Posterior vena cava (tissue), 2 donors: ENCODE measurements at regions of chr20 and their contacts with region 1.

Region 1: GRCh38 chr20:60877071-60877857 is 374.8 kb upstream of the CDH4 start:
- DNase-seq: no peak

Region 2: GRCh38 chr20:60806328-60806727 is 70.9 kb before region 1 on chr20:
- intact Hi-C with region 1: no loop called
- DNase-seq: no peak

Region 3: GRCh38 chr20:60888771-60889170 is 11.5 kb after region 1 on chr20:
- intact Hi-C with region 1: no loop called
- DNase-seq: no peak

Region 4: DNA sequence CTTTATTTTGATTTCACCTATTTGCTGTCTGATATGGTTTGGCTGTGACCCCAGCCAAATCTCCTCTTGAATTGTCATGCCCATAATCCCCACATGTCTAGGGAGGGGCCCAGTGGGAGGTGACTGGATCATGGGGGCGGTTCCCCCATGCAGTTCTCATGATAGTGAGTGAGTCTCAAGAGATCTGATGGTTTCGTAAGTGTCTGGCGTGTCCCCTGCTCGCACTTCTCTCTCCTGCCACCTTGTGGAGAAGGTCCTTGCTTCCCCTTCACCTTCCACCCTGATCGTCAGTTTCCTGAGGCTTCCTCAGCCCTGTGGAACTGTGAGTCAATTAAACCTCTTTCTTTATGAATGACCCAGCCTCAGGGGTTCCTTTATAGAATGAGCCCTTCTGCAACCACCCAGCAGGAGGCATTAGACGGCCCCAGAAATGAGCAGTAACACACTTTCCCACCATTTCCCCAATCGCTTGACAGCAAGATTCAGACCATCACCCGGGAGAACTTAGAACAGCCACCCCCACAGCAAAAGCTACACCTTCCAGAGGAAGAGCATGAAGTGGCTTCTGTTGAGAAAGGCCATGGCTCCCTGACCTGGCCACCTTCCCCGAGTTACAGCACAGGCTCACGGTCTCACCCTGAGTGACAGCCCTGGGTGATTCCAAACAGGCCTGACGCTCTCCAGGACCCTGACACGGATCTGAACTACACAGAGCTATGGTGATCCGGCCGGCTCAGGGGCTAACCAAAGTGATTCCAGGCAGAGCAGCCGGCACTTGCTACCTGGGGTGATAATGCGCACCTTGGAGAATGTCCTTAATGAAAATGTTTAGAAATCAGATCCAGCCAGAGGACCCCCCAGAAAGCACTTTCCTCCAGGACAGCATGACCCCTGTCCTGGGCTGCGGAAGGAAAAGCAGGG is 243.6 kb after region 1 on chr20:
- intact Hi-C with region 1: no loop called
- DNase-seq: no peak

Region 5: DNA sequence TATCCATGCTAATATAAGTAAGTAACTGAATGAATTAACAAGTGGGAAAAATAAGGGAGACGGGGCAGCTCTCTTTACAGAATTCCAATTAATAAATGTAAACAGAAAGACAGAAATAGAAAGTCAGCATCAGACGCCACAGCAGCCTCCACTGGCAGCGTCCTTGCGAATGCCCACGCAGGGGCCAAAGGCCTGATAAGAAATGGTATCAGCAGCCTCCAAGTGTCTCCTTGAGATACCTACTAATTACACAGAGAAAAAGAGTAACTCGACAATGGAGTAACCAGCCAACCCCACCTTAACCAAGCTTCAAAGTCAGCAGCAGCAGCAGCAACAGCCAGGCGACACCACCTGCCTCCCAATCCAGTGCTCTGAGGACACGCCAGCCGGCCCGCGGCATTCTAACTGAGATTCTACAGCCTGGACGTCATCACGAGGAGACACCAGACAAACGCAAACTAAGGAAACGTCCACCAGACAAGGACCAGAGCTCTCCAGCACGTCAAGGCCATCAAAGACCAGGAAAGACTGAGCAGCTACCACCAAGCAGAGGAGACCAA is 1109.6 kb after region 1 on chr20:
- intact Hi-C with region 1: loop called in 1 of 2 experiments (anchors 5 kb)
- DNase-seq: no peak